ENCODE measurements at regions of chr14 and their contacts with region 1.

Region 1: DNA sequence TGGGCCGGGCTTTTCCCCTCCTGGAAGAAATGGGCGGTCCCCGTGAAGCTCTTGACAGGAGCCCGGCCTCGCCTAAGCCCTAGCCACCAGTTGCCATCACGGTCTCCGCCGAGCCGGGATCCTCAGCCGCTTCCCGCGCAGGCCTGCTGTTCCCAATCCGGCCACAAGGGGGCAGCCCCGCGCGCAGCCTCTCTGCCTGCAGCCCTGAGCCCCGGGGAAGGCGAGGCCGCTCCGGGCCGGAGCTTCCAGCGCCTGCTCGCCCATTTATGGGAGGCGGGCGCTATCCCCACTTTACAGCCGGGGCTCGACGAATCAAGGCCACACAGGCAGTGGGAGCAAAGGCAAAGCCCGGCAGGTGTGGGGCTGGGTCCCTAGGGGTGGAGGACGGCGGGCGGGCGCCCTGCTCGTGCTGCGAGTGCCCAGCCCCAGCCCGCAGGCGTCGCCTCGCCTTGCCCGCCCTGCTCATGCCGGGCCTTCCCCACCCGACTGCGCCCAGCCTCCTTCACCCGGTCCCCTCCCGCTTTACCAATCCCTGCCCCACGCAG is 61.5 kb downstream of the LGMN start:
- DNase-seq: no peak
- H3K4me3 ChIP-seq: no peak overlapping the region
- H3K27me3 ChIP-seq: no peaks in the 10 kb centered on the region
- CTCF ChIP-seq: peak; percentile 98

Region 2: DNA sequence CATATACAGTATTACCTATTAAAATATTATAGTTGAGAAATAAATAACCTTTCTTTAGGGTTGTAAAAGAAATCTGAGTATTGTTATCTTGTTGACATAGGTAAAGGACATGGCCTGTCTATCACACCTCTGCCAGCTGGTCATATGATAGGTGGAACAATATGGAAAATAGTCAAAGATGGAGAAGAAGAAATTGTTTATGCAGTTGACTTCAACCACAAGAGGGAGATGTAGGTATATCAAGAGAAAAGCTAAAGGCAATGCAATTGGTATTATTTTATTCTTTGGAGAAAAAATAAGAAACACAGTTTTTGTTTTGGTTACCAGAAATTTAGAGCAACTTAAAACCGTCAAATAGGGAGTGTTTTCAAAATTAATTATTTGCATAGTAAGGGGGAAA is 551.7 kb before region 1 on chr14:
- CTCF ChIA-PET with region 1: interaction called, 23 read pairs
- POLR2A ChIA-PET with region 1: no interaction called
- DNase-seq: no peak
- H3K4me3 ChIP-seq: no peak overlapping the region
- H3K27me3 ChIP-seq: no peaks in the 10 kb centered on the region
- CTCF ChIP-seq: peak; percentile 65

Region 3: DNA sequence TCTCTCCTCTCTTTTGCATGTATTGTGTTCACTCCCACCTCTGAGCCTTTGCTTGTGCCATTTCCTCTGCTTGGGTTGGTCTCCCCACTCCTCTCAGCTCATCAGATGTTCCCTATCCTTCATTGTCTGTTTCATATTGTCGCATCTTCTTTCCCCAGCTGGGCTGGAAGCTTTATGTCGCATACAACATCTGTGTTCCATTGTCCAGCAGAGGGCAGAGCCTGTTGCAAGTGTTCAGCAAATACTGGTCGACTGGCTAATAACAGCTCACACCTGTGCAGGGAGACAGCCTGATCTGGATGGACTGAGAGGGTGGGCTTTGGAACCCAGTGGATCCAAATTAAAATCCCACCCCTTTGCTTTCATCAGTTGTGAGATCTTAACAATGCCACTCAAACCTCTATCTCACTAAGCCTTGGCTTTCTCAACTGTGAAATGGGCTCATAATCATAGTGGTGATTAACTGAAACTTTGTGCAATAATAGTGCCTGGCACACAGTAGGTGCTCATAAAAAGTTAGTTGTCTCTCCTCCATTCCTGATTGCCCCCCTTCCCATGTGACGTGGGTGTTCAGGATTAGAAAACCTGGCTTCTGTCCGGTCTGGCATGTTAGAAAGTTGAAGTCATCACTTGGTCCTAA is 97.6 kb before region 1 on chr14:
- CTCF ChIA-PET with region 1: interaction called, 12 read pairs
- POLR2A ChIA-PET with region 1: no interaction called
- DNase-seq: no peak
- H3K4me3 ChIP-seq: no peak overlapping the region
- H3K27me3 ChIP-seq: no peaks in the 10 kb centered on the region
- CTCF ChIP-seq: peak; percentile 52

Region 4: GRCh38 chr14:92670160-92670559 is 16.8 kb before region 1 on chr14:
- CTCF ChIA-PET with region 1: interaction called, 21 read pairs
- POLR2A ChIA-PET with region 1: no interaction called
- DNase-seq: peak; percentile 75
- H3K4me3 ChIP-seq: no peak overlapping the region
- H3K27me3 ChIP-seq: no peaks in the 10 kb centered on the region
- CTCF ChIP-seq: peak; percentile 53

Region 5: DNA sequence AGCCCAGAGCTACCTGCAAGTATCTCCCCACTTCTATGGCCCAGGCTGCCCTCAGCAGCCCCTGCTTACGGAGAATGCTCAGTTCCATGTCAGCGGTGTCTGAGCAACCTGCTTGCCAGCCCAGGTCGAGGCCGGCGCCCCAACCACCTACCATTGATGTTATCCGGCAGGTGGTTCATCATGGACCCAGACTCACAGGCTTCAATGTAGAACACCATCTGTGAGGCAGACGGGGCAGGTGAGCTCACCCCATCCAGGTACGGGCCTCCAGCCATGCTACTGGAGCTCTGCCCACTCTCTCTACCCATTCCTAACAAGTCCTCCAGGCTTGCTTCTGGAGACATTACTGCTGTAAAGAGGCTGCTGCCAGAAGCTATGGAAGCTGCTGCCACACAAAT is 25.7 kb after region 1 on chr14:
- CTCF ChIA-PET with region 1: interaction called, 11 read pairs
- POLR2A ChIA-PET with region 1: no interaction called
- DNase-seq: no peak
- H3K4me3 ChIP-seq: no peak overlapping the region
- H3K27me3 ChIP-seq: no peaks in the 10 kb centered on the region
- CTCF ChIP-seq: no peak

Region 6: GRCh38 chr14:92783816-92784431 is 97.0 kb after region 1 on chr14:
- CTCF ChIA-PET with region 1: interaction called, 67 read pairs
- POLR2A ChIA-PET with region 1: no interaction called
- DNase-seq: no peak
- H3K4me3 ChIP-seq: no peak overlapping the region
- H3K27me3 ChIP-seq: no peaks in the 10 kb centered on the region
- CTCF ChIP-seq: peak; percentile 60

Region 7: GRCh38 chr14:92793709-92794546 is 107.0 kb after region 1 on chr14 and contains the start of gene GOLGA5:
- CTCF ChIA-PET with region 1: interaction called, 10 read pairs
- POLR2A ChIA-PET with region 1: no interaction called
- DNase-seq: peak; percentile 83
- H3K4me3 ChIP-seq: peak within 1 kb of the TSS; percentile 92
- H3K27me3 ChIP-seq: no peaks in the 10 kb centered on the region
- CTCF ChIP-seq: no peak
- polyA plus RNA-seq, gene GOLGA5: 29.7 and 52.2 TPM in 2 replicates

Region 8: DNA sequence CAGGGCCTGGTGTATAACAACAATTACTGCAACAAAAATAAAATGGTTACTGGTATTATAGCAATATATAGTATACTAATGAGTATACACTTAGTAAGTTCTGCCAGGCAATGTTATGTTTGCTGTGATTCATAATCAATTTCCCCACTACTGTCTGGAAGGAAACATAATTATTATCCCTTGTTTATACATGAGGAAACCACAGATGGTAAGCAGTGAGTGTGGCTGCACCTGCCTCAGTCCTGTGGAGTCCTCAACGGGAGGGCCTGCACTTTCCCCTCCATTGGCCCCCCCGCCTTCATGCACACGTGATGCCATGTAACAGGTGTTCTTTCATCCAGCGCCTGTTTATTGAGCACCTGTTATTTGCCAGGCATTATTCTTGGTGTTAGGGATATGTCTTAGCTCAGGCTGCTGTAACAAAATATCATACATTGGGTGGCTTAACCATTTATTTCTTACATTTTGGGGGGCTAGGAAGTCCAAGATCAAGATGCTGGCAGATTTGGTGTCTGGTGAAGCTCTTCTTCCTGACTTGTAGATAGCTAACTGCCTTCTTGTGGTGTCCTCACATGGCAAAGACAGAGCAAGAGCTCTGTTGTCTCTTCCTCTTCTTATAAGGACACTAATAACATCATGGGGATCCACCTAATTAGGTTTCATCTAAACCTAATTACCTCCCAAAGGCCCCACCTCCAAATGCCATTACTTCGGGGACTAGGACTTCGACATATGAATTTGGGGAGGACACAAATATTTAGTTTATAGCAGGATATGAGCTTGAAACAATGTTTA is 176.5 kb after region 1 on chr14:
- CTCF ChIA-PET with region 1: no interaction called
- POLR2A ChIA-PET with region 1: no interaction called
- DNase-seq: no peak
- H3K4me3 ChIP-seq: no peak overlapping the region
- H3K27me3 ChIP-seq: no peaks in the 10 kb centered on the region; the same call in 1 of the 2 replicates
- CTCF ChIP-seq: no peak

Measured in BJ (cell line).